Ascending aorta (tissue), 2 donors: ENCODE measurements at regions of chr7 and their contacts with region 1.

Region 1: DNA sequence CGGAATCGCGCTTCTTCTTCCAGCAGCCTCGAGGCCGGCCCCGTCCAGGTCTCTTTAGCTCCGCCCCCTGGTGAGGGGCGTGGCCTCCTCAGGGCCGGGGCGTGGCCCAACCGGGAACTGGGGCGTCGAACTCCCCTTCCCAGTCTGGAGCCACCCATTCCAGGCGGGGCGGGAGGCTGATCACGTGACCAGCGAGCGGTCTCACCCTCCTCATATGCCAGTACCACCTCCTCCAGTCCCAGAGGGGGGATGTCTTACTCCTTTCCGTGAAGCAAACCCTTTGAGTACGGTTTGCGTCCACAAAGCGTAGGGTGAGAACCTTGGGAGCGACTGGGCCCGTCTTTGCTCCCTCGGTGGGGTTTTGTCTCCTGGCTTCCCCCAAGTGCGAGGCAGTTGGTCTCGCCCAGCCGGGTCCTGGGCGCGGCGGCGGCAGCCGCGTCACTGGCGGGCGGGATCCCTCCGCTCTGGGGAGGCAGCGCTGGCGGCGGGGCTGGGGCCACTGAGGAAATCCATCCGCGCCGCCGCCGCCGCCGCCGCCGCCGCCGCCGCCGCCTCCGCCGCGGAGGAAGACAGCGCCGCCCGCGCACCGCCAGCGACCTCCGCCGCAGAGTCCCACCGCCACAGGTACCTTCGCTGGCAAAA is at the start of gene GNB2:
- DNase-seq: peak; percentile 99
- H3K4me3 ChIP-seq: peak within 1 kb of the TSS; percentile 85 to 93
- H3K27ac ChIP-seq: peak within 1 kb of the TSS; percentile 96 to 99
- H3K4me1 ChIP-seq: peaks cover 3 to 7% of the 10 kb centered on the region in 2 donors
- H3K27me3 ChIP-seq: no peaks in the 10 kb centered on the region
- CTCF ChIP-seq: peak in 1 of 3 experiments; percentile 12
- total RNA-seq, gene GNB2: 500 TPM

Region 2: GRCh38 chr7:100435401-100436304 is 237.8 kb before region 1 on chr7:
- intact Hi-C with region 1: loop called (anchors 1 kb)
- DNase-seq: peak in 1 of 2 donors; percentile 68
- H3K4me3 ChIP-seq: peak overlapping the region; percentile 90
- H3K27ac ChIP-seq: peak overlapping the region; percentile 96 to 98
- H3K4me1 ChIP-seq: peaks cover 4 to 27% of the 10 kb centered on the region in 2 donors
- H3K27me3 ChIP-seq: no peaks in the 10 kb centered on the region
- CTCF ChIP-seq: no peak

Region 3: GRCh38 chr7:100478966-100479665 is 194.3 kb before region 1 on chr7 and contains the start of gene TSC22D4:
- intact Hi-C with region 1: loop called (anchors 2 kb)
- DNase-seq: peak; percentile 77 to 95
- H3K4me3 ChIP-seq: peak within 1 kb of the TSS; percentile 90 to 92
- H3K27ac ChIP-seq: peak within 1 kb of the TSS; percentile 85 to 87
- H3K4me1 ChIP-seq: peaks cover 25 to 39% of the 10 kb centered on the region in 2 donors
- H3K27me3 ChIP-seq: no peaks in the 10 kb centered on the region
- CTCF ChIP-seq: no peak
- total RNA-seq, gene TSC22D4: 68.2 TPM

Region 4: DNA sequence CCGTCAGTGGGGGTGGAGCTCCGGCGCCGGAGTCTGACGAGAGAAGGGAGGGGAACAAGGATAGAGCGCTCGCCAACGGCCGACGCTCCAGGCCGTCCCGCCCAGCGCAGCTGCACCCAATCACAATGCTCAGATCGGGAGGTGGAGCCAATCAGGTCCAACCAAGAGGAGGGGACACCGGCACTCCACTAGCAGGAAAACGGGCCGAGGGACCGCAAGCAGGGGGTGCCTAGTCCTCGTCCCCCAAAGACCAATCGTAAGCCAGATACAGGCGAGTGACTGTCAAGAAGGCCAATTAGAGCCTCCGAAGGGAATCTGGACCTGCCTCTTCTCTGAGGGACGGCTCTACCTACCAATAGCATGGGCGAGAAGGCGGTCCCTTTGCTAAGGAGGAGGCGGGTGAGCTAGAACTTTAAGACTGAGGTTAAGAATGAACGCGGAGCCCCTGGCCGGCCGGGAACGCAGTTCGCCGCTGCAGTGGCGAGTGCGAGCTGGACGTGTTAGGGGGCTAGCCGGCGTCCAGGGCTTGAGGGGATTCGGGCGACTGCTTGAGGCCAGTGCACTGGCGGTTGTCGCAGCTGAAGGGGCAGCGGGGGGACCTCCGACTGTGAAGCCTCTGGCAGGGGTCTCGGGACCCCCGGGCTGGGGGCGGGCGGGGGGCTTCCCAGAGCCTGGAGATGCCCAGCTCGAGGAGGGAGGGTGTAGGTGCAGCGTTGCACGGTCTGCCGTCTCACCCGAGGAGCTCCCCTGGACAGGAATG is 87.0 kb before region 1 on chr7 and contains the start of gene FBXO24:
- intact Hi-C with region 1: loop called (anchors 1 kb)
- DNase-seq: peak; percentile 99 to 100
- H3K4me3 ChIP-seq: peak within 1 kb of the TSS; percentile 82 to 84
- H3K27ac ChIP-seq: peak within 1 kb of the TSS; percentile 84 to 87
- H3K4me1 ChIP-seq: peaks cover 0 to 25% of the 10 kb centered on the region in 2 donors
- H3K27me3 ChIP-seq: no peaks in the 10 kb centered on the region
- CTCF ChIP-seq: no peak
- total RNA-seq, gene FBXO24: not detected

Region 5: GRCh38 chr7:100611974-100612729 is 61.3 kb before region 1 on chr7 and contains the start of gene MOSPD3:
- intact Hi-C with region 1: loop called (anchors 1 kb)
- DNase-seq: peak; percentile 95 to 100
- H3K4me3 ChIP-seq: peak within 1 kb of the TSS; percentile 84 to 93
- H3K27ac ChIP-seq: peak within 1 kb of the TSS; percentile 86 to 88
- H3K4me1 ChIP-seq: peaks cover 3 to 11% of the 10 kb centered on the region in 2 donors
- H3K27me3 ChIP-seq: no peaks in the 10 kb centered on the region
- CTCF ChIP-seq: no peak
- total RNA-seq, gene MOSPD3: 11.0 TPM

Region 6: DNA sequence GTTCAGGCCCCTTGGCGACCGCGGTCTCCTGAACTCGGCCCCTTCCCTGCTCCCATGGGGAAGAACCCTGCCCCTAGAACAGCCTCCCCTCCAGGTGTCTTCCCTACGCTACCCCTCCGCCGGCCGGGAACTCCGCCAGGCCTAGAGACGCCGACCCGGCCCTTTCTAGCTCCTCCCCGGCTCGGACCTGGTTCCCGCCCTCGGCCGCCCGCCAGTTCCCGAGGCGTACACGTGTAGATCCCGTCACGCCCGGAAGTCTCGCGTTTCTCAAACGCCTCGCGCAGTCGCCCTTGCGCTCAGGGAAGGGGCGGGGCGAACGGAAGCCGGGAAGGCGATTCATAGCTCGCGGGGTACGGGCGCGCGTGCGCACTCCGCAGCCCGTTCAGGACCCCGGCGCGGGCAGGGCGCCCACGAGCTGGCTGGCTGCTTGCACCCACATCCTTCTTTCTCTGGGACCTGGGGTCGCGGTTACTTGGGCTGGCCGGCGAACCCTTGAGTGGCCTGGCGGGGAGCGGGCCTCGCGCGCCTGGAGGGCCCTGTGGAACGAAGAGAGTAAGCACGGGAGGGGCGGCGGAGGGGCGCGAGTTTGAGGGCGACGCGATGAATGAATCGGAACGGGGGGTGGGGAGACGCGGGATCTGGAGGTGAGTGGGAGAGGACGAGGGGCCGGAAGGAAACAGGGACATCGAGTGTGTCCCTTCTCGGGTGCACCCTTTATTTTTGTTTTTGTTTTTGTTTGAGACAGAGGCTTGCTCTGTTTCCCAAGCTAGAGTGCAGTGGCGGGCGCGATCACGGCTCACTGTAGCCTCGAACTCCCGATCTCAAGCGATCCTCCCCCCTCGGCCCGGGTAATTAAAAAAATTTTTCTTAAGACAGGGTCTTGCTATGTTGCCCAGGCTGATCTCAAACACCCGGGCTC is 32.6 kb after region 1 on chr7 and contains the start of gene POP7:
- intact Hi-C with region 1: loop called (anchors 1 kb)
- DNase-seq: peak; percentile 88 to 99
- H3K4me3 ChIP-seq: peak within 1 kb of the TSS; percentile 89 to 99
- H3K27ac ChIP-seq: peak within 1 kb of the TSS; percentile 90 to 96
- H3K4me1 ChIP-seq: peaks cover 7 to 10% of the 10 kb centered on the region in 2 donors
- H3K27me3 ChIP-seq: no peaks in the 10 kb centered on the region
- CTCF ChIP-seq: no peak
- total RNA-seq, gene POP7: 44.0 TPM